Activated T-helper 2 cell treated with anti-CD3 and anti-CD28 coated beads, Interferon-gamma antibody, Interleukin-2, Interleukin-4, amounts not matched to agents 10 μg/mL and 5 μg/mL and 100 μg/mL, durations not matched to agents 14 hours and 24 hours and 36 hours (primary cell): ENCODE measurements at regions of chr15 and their contacts with region 1.

Region 1: DNA sequence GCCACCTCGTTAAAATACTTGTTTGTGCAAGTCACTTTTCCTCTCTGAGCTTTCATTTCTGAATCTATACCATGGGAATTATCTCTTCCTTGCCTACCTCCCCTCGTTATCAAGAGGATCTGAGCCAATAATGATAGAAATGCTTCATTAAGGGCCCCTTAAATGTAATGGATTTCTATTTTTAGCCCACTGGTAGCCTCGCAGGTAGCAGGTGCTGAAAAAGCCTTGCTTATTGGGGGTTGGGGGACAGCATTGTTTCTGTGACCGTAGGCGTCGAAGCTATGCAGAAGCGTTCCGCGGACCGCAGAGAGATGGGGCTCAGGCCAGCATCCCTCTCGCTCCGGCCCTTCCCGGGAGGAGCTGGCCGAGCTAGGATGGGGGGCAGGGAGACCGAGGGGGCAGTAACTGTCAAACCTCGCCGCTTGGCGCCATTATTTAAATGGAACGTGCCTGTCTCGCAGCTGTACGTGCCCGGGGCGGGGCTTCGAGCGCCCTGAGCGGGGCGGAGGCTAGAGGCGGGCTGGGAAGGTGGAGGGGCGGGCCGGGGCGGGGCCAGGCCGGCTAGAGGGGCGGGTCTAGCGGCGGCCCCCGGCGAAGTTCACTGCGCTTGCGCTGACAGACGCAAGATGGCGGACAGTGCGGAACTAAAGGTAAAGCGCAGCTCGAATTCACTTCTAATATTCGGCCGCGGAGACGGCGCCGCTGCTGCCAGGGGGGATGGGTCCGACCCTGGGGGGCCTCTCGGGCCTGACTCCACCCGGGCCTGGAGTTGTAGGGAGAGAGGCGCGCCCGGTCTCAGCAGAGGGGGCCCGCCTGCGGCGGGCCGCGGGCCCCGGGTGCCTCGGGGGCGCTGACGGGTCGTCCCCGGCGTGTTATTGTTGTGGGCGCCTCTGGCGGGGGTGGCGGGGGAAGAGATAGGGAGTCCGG is at the start of gene PIAS1:
- DNase-seq: peak; percentile 89
- H3K4me3 Mint-ChIP-seq: peak within 1 kb of the TSS; percentile 99
- H3K27ac Mint-ChIP-seq: peak within 1 kb of the TSS; percentile 95
- H3K4me1 Mint-ChIP-seq: peaks cover 40% of the 10 kb centered on the region
- H3K27me3 Mint-ChIP-seq: peaks cover 2% of the 10 kb centered on the region
- total RNA-seq, gene PIAS1: 30.3 and 34.4 TPM in 2 replicates

Region 2: GRCh38 chr15:67863442-67863987 is 190.4 kb before region 1 on chr15:
- intact Hi-C with region 1: loop called (anchors 10 kb)
- DNase-seq: peak; percentile 56
- H3K4me3 Mint-ChIP-seq: peak overlapping the region; percentile 39
- H3K27ac Mint-ChIP-seq: no peak overlapping the region
- H3K4me1 Mint-ChIP-seq: peaks cover 4% of the 10 kb centered on the region
- H3K27me3 Mint-ChIP-seq: peaks cover 15% of the 10 kb centered on the region

Region 3: DNA sequence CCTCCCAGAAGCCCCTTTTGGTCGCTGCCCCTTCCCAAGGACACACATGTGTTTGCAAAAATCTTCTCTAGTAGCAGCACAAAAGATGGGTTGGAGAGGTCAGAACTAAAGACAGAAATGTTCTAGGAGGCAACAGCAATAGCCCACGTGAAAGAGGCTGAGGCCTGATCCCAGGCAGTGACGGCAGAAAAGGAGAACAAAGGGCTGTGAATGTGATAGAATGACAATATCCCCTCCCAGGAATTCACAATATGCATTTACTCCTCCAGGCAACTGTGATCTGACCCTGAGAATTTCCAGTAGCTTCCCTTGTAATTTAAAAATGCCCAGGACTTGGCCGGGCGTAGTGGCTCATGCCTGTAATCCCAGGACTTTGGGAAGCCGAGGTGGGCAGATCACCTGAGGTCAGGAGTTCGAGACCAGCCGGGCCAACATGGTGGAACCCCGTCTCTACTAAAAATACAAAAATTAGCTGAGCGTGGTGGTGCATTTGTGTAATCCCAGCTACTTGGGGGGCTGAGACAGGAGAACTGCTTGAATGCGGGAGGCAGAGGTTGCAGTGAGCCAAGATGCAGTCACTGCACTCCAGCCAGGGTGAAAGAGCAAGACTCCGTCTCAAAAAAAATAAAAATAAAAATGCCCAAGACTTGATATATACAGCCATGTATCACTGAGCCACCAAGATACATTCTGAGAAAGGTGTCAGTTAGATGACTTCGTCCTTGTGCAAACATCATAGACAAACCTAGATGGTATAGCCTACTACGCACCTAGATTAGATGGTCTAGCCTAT is 43.4 kb before region 1 on chr15:
- intact Hi-C with region 1: no loop called
- DNase-seq: no peak
- H3K4me3 Mint-ChIP-seq: no peak overlapping the region
- H3K27ac Mint-ChIP-seq: no peak overlapping the region
- H3K4me1 Mint-ChIP-seq: no peaks in the 10 kb centered on the region
- H3K27me3 Mint-ChIP-seq: peaks cover 22% of the 10 kb centered on the region

Region 4: GRCh38 chr15:68114356-68114755 is 60.4 kb after region 1 on chr15:
- intact Hi-C with region 1: loop called (anchors 1 kb)
- DNase-seq: no peak
- H3K4me3 Mint-ChIP-seq: peak overlapping the region; percentile 67
- H3K27ac Mint-ChIP-seq: no peak overlapping the region
- H3K4me1 Mint-ChIP-seq: peaks cover 36% of the 10 kb centered on the region
- H3K27me3 Mint-ChIP-seq: no peaks in the 10 kb centered on the region

Region 5: DNA sequence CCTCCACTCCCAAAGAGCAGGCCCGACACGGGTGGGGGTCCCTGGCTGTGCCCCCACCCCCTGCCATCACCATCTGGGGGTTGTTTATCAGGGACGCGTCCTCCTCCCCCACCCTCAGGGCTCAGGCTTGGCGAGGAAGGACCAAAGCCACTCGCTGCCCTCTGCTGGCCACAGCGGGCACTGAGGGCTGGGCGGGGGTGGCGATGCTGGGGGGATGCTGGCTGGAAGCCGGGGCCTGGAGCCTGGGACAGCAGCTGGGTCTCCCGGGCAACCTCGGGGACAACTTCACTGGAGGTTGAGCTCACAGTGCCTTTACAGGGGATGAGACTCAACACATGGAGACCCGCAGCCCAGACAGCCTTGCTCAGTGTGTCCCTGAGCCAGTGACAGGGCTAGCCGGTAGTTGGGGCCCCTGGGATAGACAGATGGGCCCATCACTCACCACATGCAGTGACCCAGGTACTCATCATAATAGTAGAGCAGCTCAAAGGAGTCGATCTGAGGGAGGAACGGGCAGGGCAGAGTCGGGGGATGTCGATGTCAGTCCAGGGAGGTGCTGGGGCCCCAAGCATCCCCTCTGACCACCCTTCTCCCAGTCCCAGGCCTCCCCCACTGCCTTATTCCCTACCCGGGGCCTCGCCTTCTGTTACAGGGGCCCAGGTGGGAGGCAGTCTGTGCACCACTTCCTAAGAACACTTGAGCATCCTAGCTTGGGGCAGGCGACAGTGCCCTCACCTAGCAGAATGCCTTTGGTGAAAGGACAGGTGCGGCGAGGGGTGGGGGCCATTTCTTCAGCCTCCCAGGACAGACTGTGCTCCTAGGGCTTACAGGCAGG is 157.1 kb after region 1 on chr15:
- intact Hi-C with region 1: loop called (anchors 2 kb)
- DNase-seq: peak; percentile 36
- H3K4me3 Mint-ChIP-seq: no peak overlapping the region
- H3K27ac Mint-ChIP-seq: peak overlapping the region; percentile 63
- H3K4me1 Mint-ChIP-seq: peaks cover 25% of the 10 kb centered on the region
- H3K27me3 Mint-ChIP-seq: no peaks in the 10 kb centered on the region

Region 6: GRCh38 chr15:68229386-68230156 is 175.6 kb after region 1 on chr15 and contains the start of gene CLN6:
- intact Hi-C with region 1: loop called (anchors 2 kb)
- DNase-seq: peak; percentile 81
- H3K4me3 Mint-ChIP-seq: peak within 1 kb of the TSS; percentile 94
- H3K27ac Mint-ChIP-seq: peak within 1 kb of the TSS; percentile 78
- H3K4me1 Mint-ChIP-seq: peaks cover 33% of the 10 kb centered on the region
- H3K27me3 Mint-ChIP-seq: no peaks in the 10 kb centered on the region
- total RNA-seq, gene CLN6: 82.4 and 84.9 TPM in 2 replicates